Activated T-helper 2 cell treated with anti-CD3 and anti-CD28 coated beads, Interferon-gamma antibody, Interleukin-2, Interleukin-4, amounts not matched to agents 10 μg/mL and 5 μg/mL and 100 μg/mL, durations not matched to agents 14 hours and 24 hours and 36 hours (primary cell): ENCODE measurements at regions of chr11 and their contacts with region 1.

Region 1: GRCh38 chr11:111926505-111927391 is 8.0 kb downstream of the C11orf52 start:
- DNase-seq: peak; percentile 94
- H3K4me3 Mint-ChIP-seq: peak overlapping the region; percentile 82
- H3K27ac Mint-ChIP-seq: peak overlapping the region; percentile 88
- H3K4me1 Mint-ChIP-seq: peaks cover 19% of the 10 kb centered on the region
- H3K27me3 Mint-ChIP-seq: peaks cover 3% of the 10 kb centered on the region

Region 2: DNA sequence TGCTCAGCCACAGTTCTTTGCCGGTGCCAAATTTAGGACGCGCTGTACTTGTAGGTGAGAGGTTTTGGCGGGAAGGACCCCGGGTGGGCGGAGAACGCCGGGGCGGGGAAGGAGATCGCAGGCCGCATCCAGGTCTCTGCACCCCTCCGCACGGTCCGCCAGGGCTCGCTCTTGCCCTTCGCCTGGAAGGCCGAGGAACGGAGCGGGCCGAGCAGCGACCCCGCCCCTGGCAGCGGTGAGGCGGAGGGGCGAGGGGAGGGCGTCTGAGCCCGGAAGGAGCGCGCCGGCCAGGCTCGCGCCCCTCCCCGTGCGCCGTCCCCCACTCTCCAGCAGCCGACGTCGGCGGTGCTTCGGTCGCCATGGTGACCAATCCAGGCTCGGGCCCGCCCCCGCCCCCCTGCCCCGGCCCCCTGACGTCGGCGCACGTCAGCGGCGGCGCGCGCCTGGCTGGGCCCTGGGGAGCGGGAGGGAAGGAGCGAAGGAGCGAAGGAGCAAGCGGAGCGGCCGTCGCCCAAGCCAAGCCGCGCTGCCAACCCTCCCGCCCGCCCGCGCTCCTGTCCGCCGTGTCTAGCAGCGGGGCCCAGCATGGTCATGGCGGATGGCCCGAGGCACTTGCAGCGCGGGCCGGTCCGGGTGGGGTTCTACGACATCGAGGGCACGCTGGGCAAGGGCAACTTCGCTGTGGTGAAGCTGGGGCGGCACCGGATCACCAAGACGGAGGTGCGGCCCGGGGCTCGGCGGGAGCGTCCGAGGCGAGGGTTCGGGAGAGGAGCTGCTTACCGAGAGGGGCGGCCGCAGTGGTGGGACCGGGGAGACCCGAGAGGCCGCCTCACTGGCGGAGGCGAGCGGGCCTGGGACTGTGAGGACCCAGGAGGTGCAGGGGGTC is 324.5 kb before region 1 on chr11 and contains the start of gene SIK2:
- intact Hi-C with region 1: loop called (anchors 1 kb)
- DNase-seq: peak; percentile 86
- H3K4me3 Mint-ChIP-seq: peak within 1 kb of the TSS; percentile 96
- H3K27ac Mint-ChIP-seq: peak within 1 kb of the TSS; percentile 88
- H3K4me1 Mint-ChIP-seq: peaks cover 31% of the 10 kb centered on the region
- H3K27me3 Mint-ChIP-seq: peaks cover 6% of the 10 kb centered on the region
- total RNA-seq, gene SIK2: 9.9 TPM in 2 replicates

Region 3: GRCh38 chr11:111870886-111871692 is 55.7 kb before region 1 on chr11 and contains the start of gene ALG9:
- intact Hi-C with region 1: loop called (anchors 2 kb)
- DNase-seq: peak; percentile 87
- H3K4me3 Mint-ChIP-seq: peak within 1 kb of the TSS; percentile 91
- H3K27ac Mint-ChIP-seq: peak within 1 kb of the TSS; percentile 85
- H3K4me1 Mint-ChIP-seq: peaks cover 28% of the 10 kb centered on the region
- H3K27me3 Mint-ChIP-seq: no peaks in the 10 kb centered on the region
- total RNA-seq, gene ALG9: 33.4 and 39.5 TPM in 2 replicates

Region 4: DNA sequence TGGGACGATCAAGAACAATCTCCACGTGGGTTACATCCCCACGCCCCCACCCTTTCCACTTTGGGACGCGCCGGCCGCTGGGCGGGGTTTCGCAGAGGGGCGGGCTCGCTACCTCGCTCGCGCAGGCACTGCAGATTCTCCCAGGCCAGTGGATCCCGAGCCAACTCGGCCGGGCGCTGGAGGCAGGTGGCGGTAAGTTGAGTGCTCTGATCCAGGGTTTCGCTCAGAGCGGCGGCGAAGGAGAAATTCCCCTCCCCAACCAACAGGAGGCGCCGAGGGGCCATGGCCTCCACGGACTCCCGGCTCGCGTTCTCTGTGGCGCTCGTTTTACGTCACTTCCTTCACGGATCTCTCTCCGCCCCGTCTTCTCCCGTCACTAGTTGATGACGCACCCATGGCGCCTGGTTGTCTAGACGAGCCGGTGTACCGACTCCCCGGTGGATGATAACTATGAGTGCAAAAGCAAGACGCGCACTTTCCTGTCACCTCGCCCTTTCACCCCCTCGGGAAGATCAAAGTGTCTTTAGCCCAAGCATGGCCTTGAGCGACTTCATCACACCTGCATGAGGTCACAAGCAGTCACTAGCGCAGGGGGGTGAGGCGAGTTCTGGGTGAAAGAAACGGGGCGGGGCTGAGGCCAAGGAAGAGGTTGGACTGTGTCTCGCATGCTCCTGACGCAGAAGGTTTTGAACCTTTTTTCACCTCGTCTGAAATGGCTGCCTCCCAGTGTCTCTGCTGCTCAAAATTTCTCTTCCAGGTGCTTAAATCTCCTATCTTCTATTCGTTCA is 47.7 kb before region 1 on chr11 and contains the starts of genes CFAP68 and FDXACB1:
- intact Hi-C with region 1: loop called (anchors 1 kb)
- DNase-seq: peak; percentile 94
- H3K4me3 Mint-ChIP-seq: peak within 1 kb of the TSS; percentile 96
- H3K27ac Mint-ChIP-seq: peak within 1 kb of the TSS; percentile 100
- H3K4me1 Mint-ChIP-seq: peaks cover 13% of the 10 kb centered on the region
- H3K27me3 Mint-ChIP-seq: no peaks in the 10 kb centered on the region
- total RNA-seq, gene CFAP68: 19.4 and 22.2 TPM in 2 replicates
- total RNA-seq, gene FDXACB1: 7.4 and 8.2 TPM in 2 replicates

Region 5: GRCh38 chr11:111982019-111982464 is 55.3 kb after region 1 on chr11:
- intact Hi-C with region 1: loop called (anchors 1 kb)
- DNase-seq: peak; percentile 15
- H3K4me3 Mint-ChIP-seq: no peak overlapping the region
- H3K27ac Mint-ChIP-seq: no peak overlapping the region
- H3K4me1 Mint-ChIP-seq: peaks cover 6% of the 10 kb centered on the region
- H3K27me3 Mint-ChIP-seq: peaks cover 2% of the 10 kb centered on the region

Region 6: DNA sequence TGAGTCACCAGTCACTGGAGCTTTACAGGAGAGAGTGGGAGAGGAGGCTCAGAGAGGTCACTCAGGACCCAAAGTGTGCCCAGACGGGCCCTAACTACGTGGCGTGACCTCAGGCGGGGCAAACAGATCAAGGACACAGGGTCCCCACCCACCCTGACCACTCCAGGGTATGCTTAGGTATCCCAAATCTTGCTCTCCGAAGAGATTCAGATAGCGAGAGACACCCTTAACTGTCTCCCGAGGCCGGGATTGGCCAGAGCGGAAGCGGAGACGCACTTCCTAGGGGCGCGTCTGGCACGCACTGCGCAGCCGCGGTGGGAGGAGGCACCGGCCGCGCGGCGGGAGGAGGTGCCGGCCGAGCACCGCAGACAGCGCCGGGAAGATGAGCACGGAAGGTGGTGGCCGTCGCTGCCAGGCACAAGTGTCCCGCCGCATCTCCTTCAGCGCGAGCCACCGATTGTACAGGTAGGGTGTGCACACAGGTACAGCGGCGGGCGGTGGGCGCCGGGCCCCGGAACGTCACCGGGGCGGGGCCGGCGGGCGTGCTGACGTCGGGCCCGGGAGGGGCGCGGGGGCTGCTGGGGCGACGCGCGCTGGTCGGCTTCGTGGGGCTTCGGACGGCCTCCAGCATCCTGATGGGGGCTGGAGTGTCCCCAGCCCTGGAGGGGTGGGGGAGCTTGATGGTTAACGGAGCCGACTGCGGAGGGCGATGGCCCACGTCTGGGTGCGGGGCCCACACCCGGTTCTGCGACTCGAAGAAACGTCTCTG is 299.5 kb after region 1 on chr11 and contains the start of gene PTS:
- intact Hi-C with region 1: loop called (anchors 2 kb)
- DNase-seq: peak; percentile 83
- H3K4me3 Mint-ChIP-seq: peak within 1 kb of the TSS; percentile 89
- H3K27ac Mint-ChIP-seq: peak within 1 kb of the TSS; percentile 92
- H3K4me1 Mint-ChIP-seq: peaks cover 21% of the 10 kb centered on the region
- H3K27me3 Mint-ChIP-seq: peaks cover 2% of the 10 kb centered on the region
- total RNA-seq, gene PTS: 30.5 and 33.4 TPM in 2 replicates